Cardiac septum (tissue), 1 donor: ENCODE measurements at regions of chr7 and their contacts with region 1.

Region 1: GRCh38 chr7:148153616-148154284 is 436.8 kb upstream of the C7orf33 start:
- DNase-seq: peak; percentile 86

Region 2: DNA sequence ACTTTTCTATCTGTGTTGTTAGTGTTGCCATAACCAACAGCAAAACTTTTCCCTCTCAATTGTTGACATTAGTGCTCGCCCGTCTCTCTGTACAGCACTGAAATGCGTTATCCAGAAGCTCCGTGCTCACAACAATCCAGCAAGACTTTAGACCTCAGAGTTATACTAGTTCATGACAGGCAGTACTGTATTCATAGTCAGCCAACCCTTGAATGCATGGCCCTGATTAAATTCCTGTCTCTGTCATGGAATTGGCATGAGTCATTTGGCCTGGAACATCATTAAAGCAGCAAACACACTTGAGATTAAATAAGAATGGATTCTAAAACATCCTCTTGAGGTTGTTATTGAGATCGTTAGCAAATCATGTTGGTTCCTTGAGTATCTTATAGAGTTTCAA is 31.3 kb after region 1 on chr7:
- intact Hi-C with region 1: loop called (anchors 2 kb)
- DNase-seq: no peak

Region 3: DNA sequence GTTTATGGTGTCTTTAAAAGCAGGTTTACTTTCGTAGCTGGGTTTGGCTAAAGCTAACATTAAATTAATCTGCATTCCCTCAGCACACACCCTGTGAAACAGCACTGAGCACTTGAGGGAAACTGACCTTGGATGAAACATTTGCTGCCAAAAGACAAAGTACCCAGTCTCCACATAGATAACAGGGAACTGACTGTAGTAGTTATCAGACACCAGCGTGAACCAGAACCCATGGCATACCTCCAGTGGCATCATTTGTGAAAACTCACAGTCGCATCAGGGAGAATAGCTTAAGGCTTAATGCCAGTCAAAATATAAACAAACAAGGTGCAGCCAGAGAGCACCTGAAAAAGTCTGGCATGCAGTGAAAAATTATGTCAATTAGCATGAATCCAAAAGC is 79.0 kb after region 1 on chr7:
- intact Hi-C with region 1: loop called (anchors 1 kb)
- DNase-seq: no peak